Ovary (tissue), 10 donors: ENCODE measurements at regions of chr11 and their contacts with region 1.

Region 1: GRCh38 chr11:75547580-75548058 is 14.4 kb upstream of the SERPINH1 start:
- DNase-seq: peak; percentile 76 to 83 (median 81)
- H3K4me3 ChIP-seq: no peak overlapping the region
- H3K27ac ChIP-seq: no peak overlapping the region
- H3K4me1 ChIP-seq: peaks cover 4% of the 10 kb centered on the region
- H3K27me3 ChIP-seq: no peaks in the 10 kb centered on the region
- CTCF ChIP-seq: peak; percentile 91 to 96 (median 92)
- EP300 ChIP-seq: no peak
- POLR2A ChIP-seq: no peak

Region 2: GRCh38 chr11:75319035-75319877 is 228.4 kb before region 1 on chr11:
- intact Hi-C with region 1: loop called in 1 of 4 experiments (anchors 5 kb)
- DNase-seq: peak in 1 of 5 donors; percentile 35
- H3K4me3 ChIP-seq: no peak overlapping the region
- H3K27ac ChIP-seq: peak overlapping the region in 1 of 2 donors; percentile 44
- H3K4me1 ChIP-seq: peaks cover 9% of the 10 kb centered on the region
- H3K27me3 ChIP-seq: no peaks in the 10 kb centered on the region
- CTCF ChIP-seq: no peak
- EP300 ChIP-seq: no peak
- POLR2A ChIP-seq: no peak

Region 3: GRCh38 chr11:75582895-75583717 is 35.5 kb after region 1 on chr11:
- intact Hi-C with region 1: loop called in 3 of 4 experiments (anchors 2 to 5 kb)
- DNase-seq: peak; percentile 76 to 89 (median 82)
- H3K4me3 ChIP-seq: peak overlapping the region; percentile 71
- H3K27ac ChIP-seq: peak overlapping the region; percentile 86 to 99
- H3K4me1 ChIP-seq: peaks cover 1% of the 10 kb centered on the region
- H3K27me3 ChIP-seq: no peaks in the 10 kb centered on the region
- CTCF ChIP-seq: peak; percentile 56 to 77 (median 60)
- EP300 ChIP-seq: no peak
- POLR2A ChIP-seq: peak; percentile 56

Region 4: DNA sequence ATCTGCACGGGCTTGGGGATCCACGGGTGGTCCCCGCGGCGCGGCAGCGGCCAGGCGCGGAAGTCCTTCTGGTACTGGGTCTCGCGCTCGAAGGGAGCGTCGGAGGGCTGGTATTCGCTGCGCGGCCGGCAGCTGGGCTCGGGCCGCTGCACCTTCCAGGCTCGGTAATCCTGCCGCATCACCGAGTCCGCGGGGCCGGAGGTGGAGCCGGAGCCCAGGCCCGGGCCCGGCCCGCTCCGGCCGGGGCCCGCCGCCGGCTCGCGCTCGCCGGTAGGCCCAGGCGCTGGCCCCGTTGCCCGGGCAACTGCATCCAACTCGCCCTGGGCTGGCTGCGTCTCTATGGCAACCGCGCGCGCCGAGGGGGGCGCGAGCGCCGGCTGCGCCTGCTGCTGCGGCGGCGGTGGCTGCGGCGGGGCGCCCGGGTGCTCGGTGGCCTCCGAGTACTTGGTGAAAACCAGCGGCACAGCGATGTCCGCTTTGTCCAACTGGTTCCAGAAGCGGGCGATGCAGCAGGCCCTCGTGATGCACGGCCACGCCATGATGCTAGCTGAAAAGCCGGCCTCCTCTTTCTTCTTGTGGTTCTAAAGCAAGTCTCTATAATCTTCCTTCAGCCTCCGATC is 120.3 kb after region 1 on chr11:
- intact Hi-C with region 1: loop called in 2 of 4 experiments (anchors 10 kb)
- DNase-seq: peak; percentile 57 to 82 (median 77)
- H3K4me3 ChIP-seq: peak overlapping the region; percentile 35
- H3K27ac ChIP-seq: no peak overlapping the region
- H3K4me1 ChIP-seq: peaks cover 8% of the 10 kb centered on the region
- H3K27me3 ChIP-seq: no peaks in the 10 kb centered on the region
- CTCF ChIP-seq: no peak
- EP300 ChIP-seq: no peak
- POLR2A ChIP-seq: no peak

Region 5: GRCh38 chr11:75706260-75706729 is 158.7 kb after region 1 on chr11:
- intact Hi-C with region 1: no loop called
- DNase-seq: peak; percentile 38 to 68 (median 62)
- H3K4me3 ChIP-seq: no peak overlapping the region
- H3K27ac ChIP-seq: no peak overlapping the region
- H3K4me1 ChIP-seq: no peaks in the 10 kb centered on the region
- H3K27me3 ChIP-seq: no peaks in the 10 kb centered on the region
- CTCF ChIP-seq: peak; percentile 47 to 79 (median 72)
- EP300 ChIP-seq: no peak
- POLR2A ChIP-seq: no peak

Region 6: DNA sequence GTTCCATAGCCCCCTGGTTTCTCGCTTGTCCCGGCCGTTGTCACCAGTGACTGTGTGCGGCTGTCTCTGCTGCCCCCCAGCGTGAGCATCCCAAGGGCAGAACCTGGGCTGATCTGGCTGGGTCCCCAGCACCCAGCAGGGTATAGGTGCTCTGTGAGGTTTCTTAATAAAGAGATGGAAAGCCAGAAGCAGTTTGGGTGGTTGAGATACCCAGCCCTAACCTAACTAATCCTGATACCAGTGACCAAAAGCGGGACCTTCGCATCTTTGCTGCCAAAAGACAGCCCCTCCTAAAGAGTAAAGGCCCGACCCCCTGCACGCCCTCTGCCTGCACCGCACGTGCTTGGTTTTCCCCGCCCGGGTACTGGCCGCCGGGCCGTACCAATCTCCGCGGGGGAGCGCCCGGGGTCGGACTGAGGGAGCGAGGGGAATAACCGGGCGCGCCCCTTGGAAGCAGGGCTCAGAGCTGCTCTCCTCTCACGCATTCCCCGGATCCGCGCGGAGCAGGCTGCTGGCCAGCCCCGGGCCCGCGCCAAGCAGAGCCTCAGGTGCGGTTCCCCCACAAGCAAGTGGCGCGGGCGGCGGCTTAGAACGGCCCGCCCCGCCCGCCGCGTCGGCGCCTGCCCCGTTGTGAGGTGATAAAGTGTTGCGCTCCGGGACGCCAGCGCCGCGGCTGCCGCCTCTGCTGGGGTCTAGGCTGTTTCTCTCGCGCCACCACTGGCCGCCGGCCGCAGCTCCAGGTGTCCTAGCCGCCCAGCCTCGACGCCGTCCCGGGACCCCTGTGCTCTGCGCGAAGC is 220.7 kb after region 1 on chr11 and contains the start of gene DGAT2:
- intact Hi-C with region 1: loop called in 1 of 4 experiments (anchors 5 kb)
- DNase-seq: peak; percentile 63 to 82 (median 70)
- H3K4me3 ChIP-seq: peak within 1 kb of the TSS; percentile 37
- H3K27ac ChIP-seq: peak within 1 kb of the TSS in 1 of 2 donors; percentile 46
- H3K4me1 ChIP-seq: peaks cover 2% of the 10 kb centered on the region
- H3K27me3 ChIP-seq: no peaks in the 10 kb centered on the region
- CTCF ChIP-seq: peak in 1 of 3 donors; percentile 4
- EP300 ChIP-seq: no peak
- POLR2A ChIP-seq: no peak
- total RNA-seq, gene DGAT2: 0.69 to 2.1 (median 1.6) TPM

Region 7: DNA sequence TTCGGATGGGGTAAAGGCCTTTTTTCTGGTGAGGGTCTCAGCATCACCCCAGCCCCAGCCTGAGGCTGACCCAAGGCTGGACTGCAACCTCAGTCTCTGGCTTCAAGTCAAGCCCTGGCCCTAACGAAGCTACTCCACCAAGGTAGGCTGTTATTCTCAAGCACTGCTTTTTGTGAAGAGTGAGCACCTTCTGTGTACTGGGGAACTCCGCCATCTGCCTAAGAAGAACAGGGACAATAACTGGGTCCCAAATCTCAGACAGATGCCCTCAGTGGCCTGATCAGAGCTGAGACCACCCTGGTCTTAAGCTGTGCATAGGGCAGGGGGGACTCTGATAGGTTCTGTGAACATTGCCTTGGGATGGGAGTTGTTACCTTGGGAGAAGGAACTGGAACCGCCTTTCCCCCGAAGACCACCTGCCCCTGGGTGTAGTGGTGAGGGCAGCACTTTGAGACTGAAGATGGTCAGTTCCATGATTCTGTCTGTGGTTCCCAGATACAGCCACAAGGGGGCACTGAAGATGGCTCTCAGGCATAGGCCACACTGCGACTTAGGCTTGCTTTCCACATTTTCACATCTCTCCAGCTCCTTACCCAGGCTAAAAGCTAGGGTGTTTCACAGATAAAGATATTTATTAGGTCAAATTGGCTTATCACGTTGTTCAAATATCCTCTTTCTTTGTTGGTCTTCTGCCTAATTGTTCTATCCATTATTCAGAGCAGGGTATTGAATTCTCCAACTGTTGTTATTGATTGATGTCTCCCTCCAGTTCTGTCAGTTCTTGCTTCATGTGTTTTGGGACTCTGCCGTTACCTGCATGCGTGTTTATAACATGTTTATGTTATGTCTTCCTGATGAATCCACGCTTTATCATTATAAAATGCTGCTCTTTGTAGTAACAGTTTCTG is 255.5 kb after region 1 on chr11:
- intact Hi-C with region 1: loop called in 1 of 4 experiments (anchors 10 kb)
- DNase-seq: peak; percentile 52 to 82 (median 68)
- H3K4me3 ChIP-seq: no peak overlapping the region
- H3K27ac ChIP-seq: no peak overlapping the region
- H3K4me1 ChIP-seq: no peaks in the 10 kb centered on the region
- H3K27me3 ChIP-seq: no peaks in the 10 kb centered on the region
- CTCF ChIP-seq: peak; percentile 58 to 74 (median 69)
- EP300 ChIP-seq: no peak
- POLR2A ChIP-seq: no peak

Region 8: GRCh38 chr11:75814686-75815344 is 267.2 kb after region 1 on chr11 and contains the start of gene UVRAG:
- intact Hi-C with region 1: loop called in 1 of 4 experiments (anchors 10 kb)
- DNase-seq: peak; percentile 98 to 99 (median 99)
- H3K4me3 ChIP-seq: peak within 1 kb of the TSS; percentile 66
- H3K27ac ChIP-seq: peak within 1 kb of the TSS; percentile 67 to 77
- H3K4me1 ChIP-seq: peaks cover 16% of the 10 kb centered on the region
- H3K27me3 ChIP-seq: no peaks in the 10 kb centered on the region
- CTCF ChIP-seq: peak in 2 of 3 donors; percentile 13 to 33
- EP300 ChIP-seq: peak; percentile 25
- POLR2A ChIP-seq: peak; percentile 71
- total RNA-seq, gene UVRAG: 17.3 to 26.7 (median 22.4) TPM